ENCODE measurements at regions of chr9 and their contacts with region 1.

Region 1: DNA sequence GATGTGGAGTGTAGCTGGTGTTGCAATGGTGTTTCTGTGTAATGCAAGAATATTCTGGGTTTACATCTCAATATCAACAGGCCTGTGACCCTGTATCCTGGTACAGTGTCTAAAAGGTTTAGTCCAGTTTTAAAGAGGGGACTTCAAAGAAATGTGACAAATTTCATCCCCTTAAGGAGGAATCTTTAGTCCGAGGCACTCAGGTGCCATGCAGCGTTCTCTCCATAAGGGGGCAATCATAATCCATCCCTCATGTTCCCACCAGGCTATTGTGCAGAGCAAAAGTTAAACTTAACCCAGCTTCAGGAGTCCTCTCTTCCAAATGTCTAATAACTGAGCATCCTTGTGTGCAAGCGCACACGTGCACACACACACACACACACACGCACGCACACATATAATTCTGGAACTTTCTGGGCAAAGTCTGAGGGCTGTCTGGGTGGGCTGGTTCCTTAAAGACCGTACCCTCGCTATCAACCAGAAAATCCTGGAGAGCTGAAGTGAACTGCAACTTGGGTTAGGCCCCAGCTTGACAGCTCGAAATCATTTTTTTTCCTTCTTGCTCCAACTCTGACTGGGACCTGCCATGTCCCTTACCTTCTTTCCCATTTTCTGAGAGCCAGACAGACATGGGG is 46.0 kb downstream of the CRB2 start:
- DNase-seq: no peak

Region 2: DNA sequence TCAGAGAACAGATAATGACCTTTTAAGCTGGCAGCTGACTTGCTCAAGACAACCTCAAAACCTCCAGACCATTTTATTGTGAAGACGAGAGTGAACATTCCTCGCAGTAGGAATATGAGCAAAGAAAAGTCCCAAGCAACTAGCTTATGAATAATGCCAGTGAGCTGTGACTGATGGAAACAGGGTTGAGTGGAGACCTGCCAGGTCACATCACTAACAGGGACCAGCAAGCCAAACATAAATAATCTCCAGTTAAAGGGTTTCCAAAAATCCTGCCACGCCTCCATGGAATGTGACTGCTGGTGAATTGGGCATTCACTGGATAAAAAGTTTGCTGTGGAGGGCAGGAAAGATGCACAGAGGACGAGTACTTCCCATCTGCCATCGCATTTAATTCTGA is 139.4 kb after region 1 on chr9:
- intact Hi-C with region 1: loop called (anchors 2 kb)
- DNase-seq: no peak

Region 3: DNA sequence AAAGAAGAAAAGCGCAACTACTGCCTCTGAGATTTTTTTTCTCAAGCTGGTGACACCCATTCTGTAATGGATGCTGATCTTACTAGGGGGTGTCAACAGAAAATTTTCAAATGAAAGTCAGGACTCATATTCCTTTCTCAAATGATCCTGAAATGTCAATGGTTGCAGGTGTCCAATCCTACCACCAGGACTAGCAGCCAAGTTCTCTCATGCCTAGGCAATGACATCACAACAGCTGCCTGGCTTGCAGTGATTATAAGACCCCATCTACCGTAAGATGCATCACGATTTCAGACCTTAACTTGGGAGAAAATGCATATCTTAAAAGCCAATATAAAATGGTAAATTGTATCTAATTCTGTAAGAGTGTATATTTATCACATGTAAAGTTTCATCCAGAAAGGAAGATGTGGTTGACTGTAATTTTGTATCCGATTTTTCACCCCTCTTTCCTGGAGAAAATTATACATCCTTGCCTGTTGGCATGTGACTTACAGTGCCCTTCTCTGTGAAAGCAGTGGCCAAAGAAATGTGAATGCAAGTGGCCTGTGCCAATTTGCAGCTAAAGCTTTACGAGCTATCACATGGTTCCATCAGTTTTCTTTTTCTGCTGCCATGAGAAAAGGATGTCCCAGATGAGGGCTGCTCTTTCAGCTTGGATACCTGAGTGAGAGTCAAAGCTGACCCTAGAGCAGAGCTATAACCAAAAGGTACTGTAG is 423.5 kb after region 1 on chr9:
- intact Hi-C with region 1: no loop called
- DNase-seq: no peak